CD4-positive, alpha-beta memory T cell (primary cell): ENCODE measurements at regions of chr4 and their contacts with region 1.

Region 1: GRCh38 chr4:165537028-165537648 is 158.3 kb downstream of the CPE start:
- DNase-seq: peak in 3 of 5 donors; percentile 8 to 22 (median 15)
- H3K4me3 ChIP-seq: no peak overlapping the region
- H3K4me3 Mint-ChIP-seq: no peak overlapping the region
- H3K27ac ChIP-seq: no peak overlapping the region
- H3K27ac Mint-ChIP-seq: no peak overlapping the region
- H3K4me1 ChIP-seq: no peaks in the 10 kb centered on the region
- H3K4me1 Mint-ChIP-seq: no peaks in the 10 kb centered on the region
- H3K27me3 ChIP-seq: no peaks in the 10 kb centered on the region
- H3K27me3 Mint-ChIP-seq: peaks cover 4 to 6% of the 10 kb centered on the region in 2 donors

Region 2: GRCh38 chr4:166091912-166092510 is 554.9 kb after region 1 on chr4:
- CTCF ChIA-PET with region 1: no interaction called
- POLR2A ChIA-PET with region 1: no interaction called
- intact Hi-C with region 1: loop called (anchors 1 kb)
- DNase-seq: peak in 2 of 5 donors; percentile 4 to 12
- H3K4me3 ChIP-seq: no peak overlapping the region
- H3K4me3 Mint-ChIP-seq: no peak overlapping the region
- H3K27ac ChIP-seq: no peak overlapping the region
- H3K27ac Mint-ChIP-seq: no peak overlapping the region
- H3K4me1 ChIP-seq: no peaks in the 10 kb centered on the region
- H3K4me1 Mint-ChIP-seq: no peaks in the 10 kb centered on the region
- H3K27me3 ChIP-seq: no peaks in the 10 kb centered on the region
- H3K27me3 Mint-ChIP-seq: no peaks in the 10 kb centered on the region